Activated CD8-positive, alpha-beta T cell treated with anti-CD3 and anti-CD28 coated beads, Interleukin-2, amount 10 ng/mL, durations not matched to agents 7 days and 5 days (primary cell): ENCODE measurements at regions of chr2 and their contacts with region 1.

Region 1: GRCh38 chr2:20635675-20636584 is 15.0 kb downstream of the HS1BP3 start:
- DNase-seq: peak; percentile 48
- ATAC-seq: peak; percentile 79
- H3K4me3 Mint-ChIP-seq: no peak overlapping the region
- H3K27ac Mint-ChIP-seq: no peak overlapping the region
- H3K4me1 Mint-ChIP-seq: peaks cover 3% of the 10 kb centered on the region
- H3K27me3 Mint-ChIP-seq: no peaks in the 10 kb centered on the region

Region 2: GRCh38 chr2:20438334-20439192 is 197.4 kb before region 1 on chr2:
- CTCF ChIA-PET with region 1: interaction called, 19 read pairs
- POLR2A ChIA-PET with region 1: no interaction called
- DNase-seq: no peak
- ATAC-seq: no peak
- H3K4me3 Mint-ChIP-seq: no peak overlapping the region
- H3K27ac Mint-ChIP-seq: no peak overlapping the region
- H3K4me1 Mint-ChIP-seq: no peaks in the 10 kb centered on the region
- H3K27me3 Mint-ChIP-seq: peaks cover 30% of the 10 kb centered on the region

Region 3: GRCh38 chr2:20446917-20447436 is 189.0 kb before region 1 on chr2 and contains the start of gene RHOB:
- CTCF ChIA-PET with region 1: interaction called, 35 read pairs
- POLR2A ChIA-PET with region 1: no interaction called
- DNase-seq: peak; percentile 91
- ATAC-seq: peak; percentile 98
- H3K4me3 Mint-ChIP-seq: peak within 1 kb of the TSS; percentile 63
- H3K27ac Mint-ChIP-seq: peak within 1 kb of the TSS; percentile 43
- H3K4me1 Mint-ChIP-seq: peaks cover 4% of the 10 kb centered on the region
- H3K27me3 Mint-ChIP-seq: peaks cover 39% of the 10 kb centered on the region
- total RNA-seq, gene RHOB: 1.2 to 1.3 TPM

Region 4: DNA sequence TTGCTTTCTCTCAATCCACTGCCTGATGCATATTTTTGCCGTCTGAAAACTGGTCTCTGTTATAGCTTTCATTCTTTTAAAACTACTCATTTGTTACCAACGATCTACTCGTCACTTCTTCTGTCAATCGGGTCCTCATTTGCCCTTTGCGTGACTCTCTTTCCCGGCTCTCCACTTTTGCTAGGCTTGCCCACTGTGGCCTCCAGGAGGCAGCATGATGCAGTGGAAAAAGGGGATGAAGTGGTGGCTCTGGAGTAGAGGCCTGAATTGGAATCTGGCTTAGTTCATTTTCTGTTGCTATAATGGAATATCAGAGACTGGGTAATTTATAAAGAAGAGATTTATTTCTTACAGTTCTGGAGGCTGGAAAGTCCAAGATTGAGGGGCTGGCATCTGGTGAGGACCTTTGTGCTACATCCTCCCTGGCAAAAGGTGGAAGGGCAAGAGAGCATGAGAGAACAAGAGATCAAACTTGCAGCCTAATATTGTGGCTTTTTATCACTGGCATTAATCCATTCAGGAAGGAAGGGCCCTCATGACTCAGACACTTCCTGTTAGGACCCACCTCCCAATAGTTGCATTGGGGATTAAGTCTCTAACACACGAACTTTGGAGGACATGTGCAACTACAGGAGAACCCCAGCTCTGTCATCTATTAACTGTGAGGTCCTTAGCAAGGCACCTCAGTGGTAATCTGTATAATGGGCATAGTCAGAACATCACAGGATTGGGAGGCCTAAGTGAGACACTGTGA is 46.4 kb after region 1 on chr2:
- CTCF ChIA-PET with region 1: no interaction called
- POLR2A ChIA-PET with region 1: no interaction called
- DNase-seq: no peak
- ATAC-seq: no peak
- H3K4me3 Mint-ChIP-seq: no peak overlapping the region
- H3K27ac Mint-ChIP-seq: no peak overlapping the region
- H3K4me1 Mint-ChIP-seq: peaks cover 5% of the 10 kb centered on the region
- H3K27me3 Mint-ChIP-seq: no peaks in the 10 kb centered on the region

Region 5: GRCh38 chr2:20796374-20796791 is 160.5 kb after region 1 on chr2:
- CTCF ChIA-PET with region 1: no interaction called
- POLR2A ChIA-PET with region 1: no interaction called
- DNase-seq: no peak
- ATAC-seq: no peak
- H3K4me3 Mint-ChIP-seq: no peak overlapping the region
- H3K27ac Mint-ChIP-seq: no peak overlapping the region
- H3K4me1 Mint-ChIP-seq: no peaks in the 10 kb centered on the region
- H3K27me3 Mint-ChIP-seq: no peaks in the 10 kb centered on the region